MCF 10A (cell line): ENCODE measurements at regions of chr11 and their contacts with region 1.

Region 1: DNA sequence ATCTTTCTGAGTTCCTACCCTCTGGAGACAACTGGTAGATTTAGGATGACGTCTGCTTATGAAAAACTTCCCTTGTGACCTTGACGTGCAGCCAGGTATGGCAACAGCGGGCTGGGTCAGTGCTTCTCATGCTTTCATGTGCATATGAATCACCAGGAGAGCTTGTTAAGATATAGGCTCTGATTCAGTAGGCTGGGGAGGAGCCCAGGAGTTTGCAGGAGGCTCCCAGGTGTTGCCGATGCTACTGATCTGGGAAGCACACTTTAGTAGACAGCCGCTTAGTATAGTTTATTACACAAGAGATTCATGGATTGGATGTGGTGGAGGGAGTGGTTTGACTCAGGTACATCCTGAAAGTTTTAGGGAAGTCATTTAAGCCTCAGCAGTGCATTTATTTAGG is 23.8 kb downstream of the DIXDC1 start:
- DNase-seq: peak; percentile 89
- H3K4me3 Mint-ChIP-seq: peak overlapping the region; percentile 22
- H3K27ac Mint-ChIP-seq: peak overlapping the region; percentile 74
- H3K4me1 Mint-ChIP-seq: peaks cover 20% of the 10 kb centered on the region
- H3K27me3 Mint-ChIP-seq: no peaks in the 10 kb centered on the region
- CTCF ChIP-seq: no peak

Region 2: GRCh38 chr11:111870886-111871692 is 89.8 kb before region 1 on chr11 and contains the start of gene ALG9:
- CTCF ChIA-PET with region 1: interaction called, 6 read pairs
- POLR2A ChIA-PET with region 1: interaction called, 12 read pairs
- intact Hi-C with region 1: no loop called
- DNase-seq: peak; percentile 82
- H3K4me3 Mint-ChIP-seq: peak within 1 kb of the TSS; percentile 96
- H3K27ac Mint-ChIP-seq: peak within 1 kb of the TSS; percentile 57
- H3K4me1 Mint-ChIP-seq: peaks cover 12% of the 10 kb centered on the region
- H3K27me3 Mint-ChIP-seq: no peaks in the 10 kb centered on the region
- CTCF ChIP-seq: peak; percentile 44
- total RNA-seq, gene ALG9: 28.8 and 31.2 TPM in 2 replicates

Region 3: GRCh38 chr11:111932611-111932950 is 28.3 kb before region 1 on chr11:
- CTCF ChIA-PET with region 1: interaction called, 21 read pairs
- POLR2A ChIA-PET with region 1: interaction called, 239 read pairs
- intact Hi-C with region 1: no loop called
- DNase-seq: no peak
- H3K4me3 Mint-ChIP-seq: no peak overlapping the region
- H3K27ac Mint-ChIP-seq: peak overlapping the region; percentile 16
- H3K4me1 Mint-ChIP-seq: peaks cover 21% of the 10 kb centered on the region
- H3K27me3 Mint-ChIP-seq: no peaks in the 10 kb centered on the region
- CTCF ChIP-seq: no peak

Region 4: GRCh38 chr11:111938687-111939160 is 22.2 kb before region 1 on chr11:
- CTCF ChIA-PET with region 1: interaction called, 21 read pairs
- POLR2A ChIA-PET with region 1: interaction called, 239 read pairs
- intact Hi-C with region 1: no loop called
- DNase-seq: peak; percentile 67
- H3K4me3 Mint-ChIP-seq: peak overlapping the region; percentile 71
- H3K27ac Mint-ChIP-seq: peak overlapping the region; percentile 8
- H3K4me1 Mint-ChIP-seq: peaks cover 60% of the 10 kb centered on the region
- H3K27me3 Mint-ChIP-seq: no peaks in the 10 kb centered on the region
- CTCF ChIP-seq: no peak

Region 5: GRCh38 chr11:111944651-111945051 is 16.3 kb before region 1 on chr11:
- CTCF ChIA-PET with region 1: interaction called, 21 read pairs
- POLR2A ChIA-PET with region 1: interaction called, 239 read pairs
- intact Hi-C with region 1: loop called (anchors 2 kb)
- DNase-seq: peak; percentile 76
- H3K4me3 Mint-ChIP-seq: peak overlapping the region; percentile 6
- H3K27ac Mint-ChIP-seq: peak overlapping the region; percentile 98
- H3K4me1 Mint-ChIP-seq: peaks cover 53% of the 10 kb centered on the region
- H3K27me3 Mint-ChIP-seq: no peaks in the 10 kb centered on the region
- CTCF ChIP-seq: no peak

Region 6: GRCh38 chr11:111949519-111950426 is 11.1 kb before region 1 on chr11:
- CTCF ChIA-PET with region 1: interaction called, 4 read pairs
- POLR2A ChIA-PET with region 1: interaction called, 239 read pairs
- intact Hi-C with region 1: loop called (anchors 2 kb)
- DNase-seq: no peak
- H3K4me3 Mint-ChIP-seq: no peak overlapping the region
- H3K27ac Mint-ChIP-seq: no peak overlapping the region
- H3K4me1 Mint-ChIP-seq: peaks cover 23% of the 10 kb centered on the region
- H3K27me3 Mint-ChIP-seq: no peaks in the 10 kb centered on the region
- CTCF ChIP-seq: no peak